GM12878 (cell line): ENCODE measurements at regions of chr19 and their contacts with region 1.

Region 1: DNA sequence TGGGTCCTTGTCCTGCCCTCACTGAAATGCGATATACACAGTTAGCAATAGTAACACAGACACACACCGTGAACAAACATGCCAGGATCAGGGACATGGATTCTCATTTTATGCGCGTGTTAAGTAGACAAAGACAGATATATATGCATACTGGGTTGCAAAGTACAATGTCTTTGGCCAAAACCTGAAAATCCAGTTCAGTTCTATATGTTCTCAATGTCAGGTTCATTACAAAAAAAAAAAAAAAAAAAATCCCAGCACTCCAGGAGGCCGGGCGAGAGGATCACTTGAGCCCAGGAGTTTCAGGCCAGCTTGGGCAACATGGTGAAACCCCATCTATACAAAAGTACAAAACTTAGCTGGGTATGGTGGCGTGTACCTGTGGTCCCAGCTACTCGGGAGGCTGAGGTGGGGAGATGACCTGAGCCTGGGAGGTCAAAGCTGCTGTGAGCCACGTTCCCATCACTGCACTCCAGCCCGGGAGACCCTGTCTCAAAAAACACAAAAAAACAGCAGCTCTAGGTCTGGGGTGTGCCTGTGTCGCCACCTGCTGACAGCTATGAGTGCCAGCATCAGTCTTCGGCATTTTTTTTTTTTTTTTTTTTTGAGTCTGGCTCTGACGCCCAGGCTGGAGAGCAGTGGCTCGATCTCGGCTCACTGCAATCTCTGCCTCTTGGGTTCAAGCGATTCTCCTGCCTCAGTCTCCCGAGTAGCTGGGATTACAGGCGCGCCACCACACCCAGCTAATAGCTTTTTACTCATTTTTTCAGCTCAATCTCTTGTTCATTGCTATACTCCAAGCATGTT is 10.3 kb downstream of the AP2S1 start:
- DNase-seq: no peak
- ATAC-seq: peak; percentile 87
- H3K4me3 ChIP-seq: no peak overlapping the region
- H3K27ac ChIP-seq: no peak overlapping the region
- H3K4me1 ChIP-seq: no peaks in the 10 kb centered on the region
- H3K27me3 ChIP-seq: no peaks in the 10 kb centered on the region
- CTCF ChIP-seq: peak; percentile 79 to 88 (median 80)
- EP300 ChIP-seq: no peak
- POLR2A ChIP-seq: no peak
- RAD21 ChIP-seq: peak; percentile 93

Region 2: GRCh38 chr19:46423188-46423587 is 417.2 kb before region 1 on chr19:
- CTCF ChIA-PET with region 1: no interaction called
- POLR2A ChIA-PET with region 1: no interaction called
- RAD21 ChIA-PET with region 1: no interaction called
- SMC1A ChIA-PET with region 1: no interaction called
- in situ Hi-C with region 1: no loop called
- intact Hi-C with region 1: no loop called
- DNase-seq: no peak
- ATAC-seq: peak; percentile 40; the same call in 1 of the 3 replicates
- H3K4me3 ChIP-seq: no peak overlapping the region
- H3K27ac ChIP-seq: no peak overlapping the region
- H3K4me1 ChIP-seq: no peaks in the 10 kb centered on the region
- H3K27me3 ChIP-seq: peaks cover 0 to 5% of the 10 kb centered on the region in 2 experiments; a peak in 2 of 4 replicates
- CTCF ChIP-seq: no peak
- EP300 ChIP-seq: no peak
- POLR2A ChIP-seq: no peak
- RAD21 ChIP-seq: no peak

Region 3: DNA sequence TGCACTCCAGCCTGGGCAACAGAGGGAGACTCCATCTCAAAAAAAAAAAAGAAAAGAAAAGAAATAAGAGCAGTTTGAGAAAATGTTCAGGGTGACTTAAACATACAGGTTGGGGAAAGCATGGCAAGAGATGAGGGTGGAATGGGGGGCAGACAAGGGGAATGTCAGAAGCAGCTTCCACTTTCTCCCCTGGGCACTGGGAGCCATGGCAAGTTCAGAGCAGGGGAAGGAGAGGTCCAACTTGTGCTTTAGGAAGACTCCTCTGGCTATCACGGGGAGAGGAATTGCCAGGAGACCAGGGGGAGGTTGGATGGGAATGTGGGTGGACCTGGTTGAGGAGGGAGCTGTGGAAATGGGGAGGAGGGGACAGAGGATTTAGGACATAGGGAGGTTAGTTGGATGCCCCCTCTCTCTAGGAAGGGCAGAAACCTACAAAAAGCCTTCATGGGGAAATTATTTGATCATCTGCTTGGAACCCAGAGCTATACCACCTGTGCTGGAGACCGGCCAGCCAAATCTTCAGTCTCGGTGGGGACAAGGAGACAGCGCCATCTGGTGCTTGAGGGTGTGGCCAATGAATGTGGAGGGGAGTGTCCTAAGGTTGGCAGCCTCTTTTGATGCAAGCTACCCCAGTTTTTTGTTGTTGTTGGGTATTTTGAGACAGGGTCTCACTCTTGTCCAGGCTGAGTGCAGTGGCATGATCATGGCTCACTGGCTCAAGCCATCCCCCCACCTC is 86.8 kb before region 1 on chr19:
- CTCF ChIA-PET with region 1: interaction called, 134 read pairs
- POLR2A ChIA-PET with region 1: no interaction called
- RAD21 ChIA-PET with region 1: interaction called, 41 read pairs
- SMC1A ChIA-PET with region 1: interaction called, 24 read pairs
- in situ Hi-C with region 1: loop called (anchors 5 kb)
- intact Hi-C with region 1: loop called (anchors 1 kb)
- DNase-seq: no peak
- ATAC-seq: peak; percentile 87
- H3K4me3 ChIP-seq: no peak overlapping the region
- H3K27ac ChIP-seq: no peak overlapping the region
- H3K4me1 ChIP-seq: no peaks in the 10 kb centered on the region
- H3K27me3 ChIP-seq: no peaks in the 10 kb centered on the region
- CTCF ChIP-seq: peak; percentile 73 to 76 (median 75)
- EP300 ChIP-seq: no peak
- POLR2A ChIP-seq: no peak
- RAD21 ChIP-seq: peak; percentile 58

Region 4: GRCh38 chr19:46766569-46767317 is 73.6 kb before region 1 on chr19:
- CTCF ChIA-PET with region 1: interaction called, 133 read pairs
- POLR2A ChIA-PET with region 1: no interaction called
- RAD21 ChIA-PET with region 1: interaction called, 19 read pairs
- SMC1A ChIA-PET with region 1: interaction called, 12 read pairs
- in situ Hi-C with region 1: no loop called
- intact Hi-C with region 1: no loop called
- DNase-seq: no peak
- ATAC-seq: peak; percentile 99
- H3K4me3 ChIP-seq: no peak overlapping the region
- H3K27ac ChIP-seq: no peak overlapping the region
- H3K4me1 ChIP-seq: no peaks in the 10 kb centered on the region
- H3K27me3 ChIP-seq: no peaks in the 10 kb centered on the region
- CTCF ChIP-seq: peak; percentile 70 to 89 (median 86)
- EP300 ChIP-seq: no peak
- POLR2A ChIP-seq: no peak
- RAD21 ChIP-seq: peak; percentile 38; the same call in 1 of the 2 replicates

Region 5: DNA sequence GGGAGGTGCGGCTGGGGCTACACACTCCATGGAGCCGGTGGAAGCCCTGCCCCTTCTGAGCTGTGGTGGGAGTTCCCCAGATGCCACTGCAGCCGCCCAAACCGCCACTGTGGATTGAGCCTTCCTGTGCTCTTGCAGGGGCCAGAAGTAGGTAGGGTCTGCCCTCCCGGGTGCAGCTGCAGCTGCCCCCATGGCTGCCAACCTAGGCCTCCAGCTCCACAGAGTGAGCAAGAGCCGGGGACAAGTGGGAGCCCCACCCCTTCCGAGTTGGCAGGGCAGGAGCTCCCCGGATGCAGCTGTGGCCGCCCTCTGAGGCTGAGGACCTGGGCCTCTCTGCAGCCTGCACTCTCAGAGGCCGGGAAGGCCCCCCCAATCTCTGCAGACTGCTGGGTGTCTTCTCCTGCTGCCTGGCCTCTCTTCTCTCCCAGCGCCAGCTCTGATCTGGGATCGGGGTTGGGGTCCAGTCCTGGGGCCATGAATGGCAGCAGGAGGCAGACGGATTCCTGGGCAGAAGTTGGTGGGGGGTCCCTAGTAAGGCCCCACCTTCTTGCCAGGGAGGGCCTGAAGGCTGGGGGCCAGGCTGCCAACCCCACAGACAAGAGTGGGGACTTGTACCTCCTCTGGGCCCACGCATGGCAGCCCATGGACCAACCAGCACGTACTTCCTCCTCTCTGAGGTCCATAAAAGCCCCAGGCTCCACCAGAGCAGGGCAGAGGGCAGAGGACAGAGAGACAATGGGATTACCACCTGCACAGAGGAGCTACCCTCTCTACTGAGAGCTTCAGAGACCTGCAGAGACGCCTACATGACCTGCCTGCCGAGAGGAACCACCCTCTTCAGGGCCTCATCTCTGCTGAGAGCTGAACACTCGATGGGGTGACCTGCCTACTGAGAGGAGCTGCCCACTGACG is 18.6 kb before region 1 on chr19:
- CTCF ChIA-PET with region 1: interaction called, 17 read pairs
- POLR2A ChIA-PET with region 1: interaction called, 3 read pairs
- RAD21 ChIA-PET with region 1: interaction called, 14 read pairs
- SMC1A ChIA-PET with region 1: interaction called, 11 read pairs
- in situ Hi-C with region 1: no loop called
- intact Hi-C with region 1: no loop called
- DNase-seq: no peak
- ATAC-seq: peak; percentile 81
- H3K4me3 ChIP-seq: peak overlapping the region; percentile 33; the same call in 1 of the 2 replicates
- H3K27ac ChIP-seq: peak overlapping the region; percentile 51
- H3K4me1 ChIP-seq: peaks cover 27% of the 10 kb centered on the region
- H3K27me3 ChIP-seq: no peaks in the 10 kb centered on the region
- CTCF ChIP-seq: no peak
- EP300 ChIP-seq: no peak
- POLR2A ChIP-seq: peak; percentile 55
- RAD21 ChIP-seq: no peak

Region 6: DNA sequence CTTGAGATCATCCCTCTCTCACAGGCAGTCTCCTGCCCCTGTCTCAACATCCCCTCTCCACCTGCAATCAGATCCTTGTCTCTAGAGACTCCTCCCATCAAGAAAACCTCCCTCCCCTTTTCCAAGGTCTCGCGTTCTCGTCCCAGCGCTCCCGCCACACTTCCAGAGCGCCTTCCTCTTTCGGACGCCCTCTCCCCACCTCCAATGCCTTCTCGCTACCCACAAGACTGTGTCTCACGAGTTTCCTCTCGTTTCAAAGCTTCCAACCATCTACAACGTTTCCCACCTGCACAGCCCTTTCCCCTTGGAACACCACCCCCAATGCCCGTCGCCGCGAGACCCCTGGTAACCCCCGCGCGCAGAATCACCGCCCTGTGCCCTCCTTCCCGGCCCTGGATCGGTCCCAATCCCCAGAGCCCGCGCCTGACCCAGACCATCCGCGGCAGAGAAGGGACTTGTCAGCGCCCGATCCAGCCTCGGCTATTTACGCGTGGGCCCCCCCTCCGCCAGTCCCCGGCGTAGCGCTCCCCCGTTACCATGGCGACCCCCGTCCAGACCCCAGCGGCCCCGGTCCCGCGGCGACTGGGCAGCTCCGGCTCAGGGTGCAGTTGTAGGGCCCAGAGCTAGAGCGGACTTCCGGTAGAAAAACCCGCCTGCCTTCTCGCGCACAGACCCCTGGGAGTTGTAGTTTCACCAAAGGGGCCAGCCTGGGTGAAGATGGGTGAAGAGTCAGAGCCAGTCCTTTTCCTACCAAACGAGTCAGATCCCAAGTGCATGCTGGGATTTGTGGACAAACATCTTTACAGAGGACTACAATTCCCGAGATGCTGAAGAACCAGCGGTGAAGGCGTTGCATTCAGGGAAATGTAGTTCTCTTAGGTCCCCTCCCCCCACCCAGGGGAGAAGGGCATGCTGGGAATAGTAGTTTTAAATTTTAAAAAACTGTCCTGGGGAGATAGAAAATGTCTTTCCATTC is 10.2 kb after region 1 on chr19 and contains the start of gene AP2S1:
- CTCF ChIA-PET with region 1: interaction called, 16 read pairs
- POLR2A ChIA-PET with region 1: interaction called, 8 read pairs
- RAD21 ChIA-PET with region 1: no interaction called
- SMC1A ChIA-PET with region 1: no interaction called
- in situ Hi-C with region 1: no loop called
- intact Hi-C with region 1: no loop called
- DNase-seq: peak; percentile 98
- ATAC-seq: peak; percentile 99
- H3K4me3 ChIP-seq: peak within 1 kb of the TSS; percentile 99
- H3K27ac ChIP-seq: peak within 1 kb of the TSS; percentile 56
- H3K4me1 ChIP-seq: peaks cover 3% of the 10 kb centered on the region; the same call in 1 of the 2 replicates
- H3K27me3 ChIP-seq: no peaks in the 10 kb centered on the region
- CTCF ChIP-seq: no peak
- EP300 ChIP-seq: 0 out of 4 replicates have a peak, but pooled peaks of 1 of the 2 experiments have one; percentile 25
- POLR2A ChIP-seq: peak; percentile 93
- RAD21 ChIP-seq: no peak
- polyA plus RNA-seq, gene AP2S1: 10.8 to 46.6 TPM